Esophagus muscularis mucosa (tissue), 4 donors: ENCODE measurements at regions of chrX and their contacts with region 1.

Region 1: DNA sequence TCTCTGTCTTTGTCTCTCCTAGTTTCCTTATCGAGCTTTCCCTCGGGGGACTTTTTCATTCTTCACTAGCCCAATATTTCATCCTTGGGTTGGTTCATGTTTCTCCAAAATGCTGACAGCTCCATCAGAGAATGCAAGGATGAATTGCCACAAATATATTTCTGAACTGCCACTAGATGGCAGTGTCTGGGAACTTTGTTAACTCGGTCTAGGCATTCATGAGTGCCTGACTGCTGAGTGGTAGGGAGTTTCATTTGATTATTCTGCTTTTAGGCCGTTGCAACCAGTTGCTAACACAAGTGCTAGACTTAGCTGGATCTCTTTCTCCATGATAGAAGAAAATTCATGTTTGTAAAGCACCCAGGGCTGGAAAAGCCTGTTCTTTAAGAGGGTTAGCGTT is 73.5 kb upstream of the RAP2C start:
- DNase-seq: no peak
- H3K4me3 ChIP-seq: no peak overlapping the region
- H3K27ac ChIP-seq: no peak overlapping the region
- H3K4me1 ChIP-seq: peaks cover 0 to 3% (median 0%) of the 10 kb centered on the region in 4 donors
- H3K27me3 ChIP-seq: no peaks in the 10 kb centered on the region
- CTCF ChIP-seq: peak; percentile 50 to 63 (median 57)
- EP300 ChIP-seq: no peak
- POLR2A ChIP-seq: no peak

Region 2: GRCh38 chrX:132474522-132474921 is 181.7 kb after region 1 on chrX:
- intact Hi-C with region 1: loop called (anchors 10 kb)
- DNase-seq: no peak
- H3K4me3 ChIP-seq: no peak overlapping the region
- H3K27ac ChIP-seq: no peak overlapping the region
- H3K4me1 ChIP-seq: no peaks in the 10 kb centered on the region
- H3K27me3 ChIP-seq: no peaks in the 10 kb centered on the region
- CTCF ChIP-seq: no peak
- EP300 ChIP-seq: no peak
- POLR2A ChIP-seq: no peak

Region 3: GRCh38 chrX:132615391-132616131 is 322.8 kb after region 1 on chrX:
- intact Hi-C with region 1: loop called (anchors 5 kb)
- DNase-seq: no peak
- H3K4me3 ChIP-seq: no peak overlapping the region
- H3K27ac ChIP-seq: no peak overlapping the region
- H3K4me1 ChIP-seq: no peaks in the 10 kb centered on the region
- H3K27me3 ChIP-seq: no peaks in the 10 kb centered on the region
- CTCF ChIP-seq: peak in 2 of 3 experiments; percentile 24 to 30
- EP300 ChIP-seq: no peak
- POLR2A ChIP-seq: no peak

Region 4: GRCh38 chrX:132631579-132632232 is 338.9 kb after region 1 on chrX:
- intact Hi-C with region 1: loop called (anchors 5 kb)
- DNase-seq: no peak
- H3K4me3 ChIP-seq: no peak overlapping the region
- H3K27ac ChIP-seq: no peak overlapping the region
- H3K4me1 ChIP-seq: no peaks in the 10 kb centered on the region
- H3K27me3 ChIP-seq: peaks cover 0 to 4% (median 0%) of the 10 kb centered on the region in 4 donors
- CTCF ChIP-seq: peak; percentile 41 to 52 (median 50)
- EP300 ChIP-seq: no peak
- POLR2A ChIP-seq: no peak